ENCODE measurements at regions of chr19 and their contacts with region 1.

Region 1: GRCh38 chr19:19488875-19489690 is 26.3 kb downstream of the TSSK6 start:
- DNase-seq: peak; percentile 78 to 99 (median 87)
- ATAC-seq: peak; percentile 89
- H3K4me3 ChIP-seq: peak overlapping the region; percentile 11
- H3K4me3 Mint-ChIP-seq: peak overlapping the region; percentile 32
- H3K27ac ChIP-seq: peak overlapping the region; percentile 86 to 96
- H3K27ac Mint-ChIP-seq: peak overlapping the region; percentile 99
- H3K4me1 ChIP-seq: peaks cover 64% of the 10 kb centered on the region
- H3K4me1 Mint-ChIP-seq: peaks cover 55% of the 10 kb centered on the region
- H3K27me3 ChIP-seq: no peaks in the 10 kb centered on the region
- H3K27me3 Mint-ChIP-seq: no peaks in the 10 kb centered on the region
- CTCF ChIP-seq: no peak

Region 2: GRCh38 chr19:19145684-19146608 is 343.1 kb before region 1 on chr19:
- CTCF ChIA-PET with region 1: interaction called, 5 read pairs
- POLR2A ChIA-PET with region 1: no interaction called
- intact Hi-C with region 1: loop called (anchors 1 to 2 kb)
- DNase-seq: peak; percentile 72 to 91 (median 86)
- ATAC-seq: peak; percentile 98
- H3K4me3 ChIP-seq: no peak overlapping the region
- H3K4me3 Mint-ChIP-seq: no peak overlapping the region
- H3K27ac ChIP-seq: no peak overlapping the region
- H3K27ac Mint-ChIP-seq: no peak overlapping the region
- H3K4me1 ChIP-seq: peaks cover 8% of the 10 kb centered on the region
- H3K4me1 Mint-ChIP-seq: no peaks in the 10 kb centered on the region
- H3K27me3 ChIP-seq: no peaks in the 10 kb centered on the region
- H3K27me3 Mint-ChIP-seq: no peaks in the 10 kb centered on the region
- CTCF ChIP-seq: peak; percentile 79

Region 3: DNA sequence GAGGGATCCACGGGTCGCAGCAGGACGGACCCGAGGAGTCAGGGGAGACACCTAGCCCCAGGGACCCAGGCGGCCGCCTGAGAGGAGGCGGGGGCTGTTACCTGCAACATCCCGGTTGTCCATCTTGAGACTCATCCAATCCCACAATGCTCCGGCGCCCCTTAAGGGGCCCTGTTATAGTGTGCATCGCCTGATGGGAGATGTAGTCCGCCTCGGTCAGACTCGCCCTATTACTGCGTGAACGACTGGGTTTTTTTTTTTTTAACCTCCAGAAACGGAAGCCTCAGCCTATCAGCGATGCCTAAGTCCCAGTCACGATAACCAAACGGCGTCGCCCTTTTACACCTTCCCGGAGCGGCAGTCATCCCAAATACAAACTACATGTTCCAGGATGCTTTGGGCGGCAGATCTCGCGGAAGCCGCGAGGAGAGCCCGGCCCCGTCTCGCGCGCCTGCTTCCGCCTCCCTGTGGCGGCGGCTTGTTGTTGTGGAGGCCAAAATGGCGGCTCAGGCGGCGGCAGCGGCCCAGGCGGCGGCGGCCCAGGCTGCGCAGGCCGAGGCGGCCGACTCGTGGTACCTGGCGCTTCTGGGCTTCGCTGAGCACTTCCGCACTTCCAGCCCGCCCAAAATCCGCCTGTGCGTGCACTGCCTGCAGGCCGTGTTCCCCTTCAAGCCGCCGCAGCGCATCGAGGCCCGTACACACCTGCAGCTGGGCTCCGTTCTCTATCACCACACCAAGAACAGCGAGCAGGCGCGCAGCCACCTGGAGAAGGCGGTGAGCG is 168.5 kb before region 1 on chr19 and contains the starts of genes MAU2 and SUGP1:
- CTCF ChIA-PET with region 1: interaction called, 3 read pairs
- POLR2A ChIA-PET with region 1: interaction called, 3 read pairs
- intact Hi-C with region 1: loop called in 1 of 2 experiments (anchors 5 kb)
- DNase-seq: peak; percentile 81 to 96 (median 88)
- ATAC-seq: peak; percentile 88
- H3K4me3 ChIP-seq: peak within 1 kb of the TSS; percentile 71
- H3K4me3 Mint-ChIP-seq: peak within 1 kb of the TSS; percentile 100
- H3K27ac ChIP-seq: peak within 1 kb of the TSS; percentile 92 to 95
- H3K27ac Mint-ChIP-seq: peak within 1 kb of the TSS; percentile 99
- H3K4me1 ChIP-seq: peaks cover 57% of the 10 kb centered on the region
- H3K4me1 Mint-ChIP-seq: peaks cover 43% of the 10 kb centered on the region
- H3K27me3 ChIP-seq: no peaks in the 10 kb centered on the region
- H3K27me3 Mint-ChIP-seq: no peaks in the 10 kb centered on the region
- CTCF ChIP-seq: peak; percentile 16
- total RNA-seq, gene MAU2: 132 to 133 TPM
- total RNA-seq, gene SUGP1: 49.7 to 56.0 TPM

Region 4: GRCh38 chr19:19366612-19367396 is 122.3 kb before region 1 on chr19:
- CTCF ChIA-PET with region 1: interaction called, 33 read pairs
- POLR2A ChIA-PET with region 1: interaction called, 81 read pairs
- intact Hi-C with region 1: loop called (anchors 1 kb)
- DNase-seq: peak; percentile 45 to 87 (median 64)
- ATAC-seq: peak; percentile 56
- H3K4me3 ChIP-seq: no peak overlapping the region
- H3K4me3 Mint-ChIP-seq: peak overlapping the region; percentile 49
- H3K27ac ChIP-seq: no peak overlapping the region
- H3K27ac Mint-ChIP-seq: peak overlapping the region; percentile 76
- H3K4me1 ChIP-seq: peaks cover 33% of the 10 kb centered on the region
- H3K4me1 Mint-ChIP-seq: peaks cover 21% of the 10 kb centered on the region
- H3K27me3 ChIP-seq: no peaks in the 10 kb centered on the region
- H3K27me3 Mint-ChIP-seq: no peaks in the 10 kb centered on the region
- CTCF ChIP-seq: peak; percentile 91

Region 5: DNA sequence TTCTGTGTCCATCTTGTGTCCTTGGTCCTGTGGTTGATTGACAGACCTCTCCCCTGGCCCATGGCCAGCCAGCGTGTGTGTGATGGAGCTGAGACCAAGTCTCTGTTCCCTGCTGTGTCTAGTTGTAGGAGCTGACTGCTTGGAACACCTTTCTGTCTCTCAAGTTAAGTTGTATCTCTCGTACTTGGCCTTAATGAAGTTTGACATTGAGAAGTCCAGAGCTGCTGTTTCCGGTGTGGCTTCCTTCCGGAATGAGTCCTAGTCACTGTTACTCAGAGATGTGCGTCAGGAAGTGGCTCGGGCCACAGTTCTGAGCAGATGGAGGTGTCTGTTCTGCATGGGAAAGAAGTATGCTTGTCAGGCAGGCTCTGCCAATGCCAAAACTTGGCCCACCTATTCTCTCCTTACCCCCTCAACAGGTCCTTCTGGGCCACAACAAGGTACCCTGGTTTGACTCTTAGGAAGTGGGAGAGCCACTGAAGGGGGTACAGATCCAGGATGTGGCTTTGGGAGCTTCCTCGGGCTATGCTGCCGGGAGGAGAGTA is 29.3 kb before region 1 on chr19:
- CTCF ChIA-PET with region 1: interaction called, 12 read pairs
- POLR2A ChIA-PET with region 1: interaction called, 20 read pairs
- intact Hi-C with region 1: loop called in 1 of 2 experiments (anchors 2 kb)
- DNase-seq: peak; percentile 32 to 89 (median 62)
- ATAC-seq: peak; percentile 68
- H3K4me3 ChIP-seq: peak overlapping the region; percentile 50
- H3K4me3 Mint-ChIP-seq: peak overlapping the region; percentile 89
- H3K27ac ChIP-seq: peak overlapping the region; percentile 88 to 91
- H3K27ac Mint-ChIP-seq: peak overlapping the region; percentile 95
- H3K4me1 ChIP-seq: peaks cover 90% of the 10 kb centered on the region
- H3K4me1 Mint-ChIP-seq: peaks cover 75% of the 10 kb centered on the region
- H3K27me3 ChIP-seq: no peaks in the 10 kb centered on the region
- H3K27me3 Mint-ChIP-seq: no peaks in the 10 kb centered on the region
- CTCF ChIP-seq: no peak

Measured in CD4-positive, alpha-beta T cell (primary cell).